Heart right ventricle (tissue), 16 donors: ENCODE measurements at regions of chr12 and their contacts with region 1.

Region 1: GRCh38 chr12:15979096-15980092 is 68.3 kb downstream of the DERA start:
- DNase-seq: no peak
- ATAC-seq: peak in 6 of 8 donors; percentile 41 to 74 (median 66)
- H3K4me3 ChIP-seq: no peak overlapping the region
- H3K27ac ChIP-seq: peak overlapping the region; percentile 31 to 74 (median 60)
- H3K4me1 ChIP-seq: peaks cover 9 to 45% (median 25%) of the 10 kb centered on the region in 9 donors
- H3K27me3 ChIP-seq: no peaks in the 10 kb centered on the region
- CTCF ChIP-seq: peak; percentile 27 to 55 (median 40)

Region 2: GRCh38 chr12:15268927-15269552 is 710.4 kb before region 1 on chr12:
- intact Hi-C with region 1: no loop called
- DNase-seq: peak in 1 of 2 donors; percentile 24
- ATAC-seq: peak in 6 of 8 donors; percentile 28 to 69 (median 56)
- H3K4me3 ChIP-seq: no peak overlapping the region
- H3K27ac ChIP-seq: no peak overlapping the region
- H3K4me1 ChIP-seq: no peaks in the 10 kb centered on the region
- H3K27me3 ChIP-seq: peaks cover 0 to 6% (median 0%) of the 10 kb centered on the region in 7 donors
- CTCF ChIP-seq: peak; percentile 71 to 91 (median 85)

Region 3: DNA sequence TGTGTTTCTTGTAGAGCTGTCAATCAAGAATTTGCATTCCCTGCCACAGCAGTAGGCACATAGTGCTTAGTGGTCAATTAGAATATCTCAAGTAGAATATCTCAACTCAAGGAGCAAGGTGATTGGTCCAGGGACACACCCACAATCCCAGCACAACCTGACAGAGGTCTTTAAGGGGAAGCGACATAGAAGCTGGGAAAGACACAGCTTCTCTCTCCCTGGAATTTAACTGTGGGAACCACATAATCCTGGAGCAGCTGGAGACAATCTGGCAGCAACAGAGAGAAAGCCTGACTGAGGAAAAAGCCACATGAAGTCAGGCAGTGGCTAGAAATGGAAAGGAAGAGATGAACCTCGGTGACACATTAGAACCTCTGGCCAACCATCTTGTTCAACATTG is 712.2 kb after region 1 on chr12:
- intact Hi-C with region 1: loop called in 1 of 10 experiments (anchors 10 kb)
- DNase-seq: no peak
- ATAC-seq: no peak
- H3K4me3 ChIP-seq: no peak overlapping the region
- H3K27ac ChIP-seq: no peak overlapping the region
- H3K4me1 ChIP-seq: no peaks in the 10 kb centered on the region
- H3K27me3 ChIP-seq: no peaks in the 10 kb centered on the region
- CTCF ChIP-seq: no peak